Caco-2 (cell line): ENCODE measurements at regions of chr17 and their contacts with region 1.

Region 1: DNA sequence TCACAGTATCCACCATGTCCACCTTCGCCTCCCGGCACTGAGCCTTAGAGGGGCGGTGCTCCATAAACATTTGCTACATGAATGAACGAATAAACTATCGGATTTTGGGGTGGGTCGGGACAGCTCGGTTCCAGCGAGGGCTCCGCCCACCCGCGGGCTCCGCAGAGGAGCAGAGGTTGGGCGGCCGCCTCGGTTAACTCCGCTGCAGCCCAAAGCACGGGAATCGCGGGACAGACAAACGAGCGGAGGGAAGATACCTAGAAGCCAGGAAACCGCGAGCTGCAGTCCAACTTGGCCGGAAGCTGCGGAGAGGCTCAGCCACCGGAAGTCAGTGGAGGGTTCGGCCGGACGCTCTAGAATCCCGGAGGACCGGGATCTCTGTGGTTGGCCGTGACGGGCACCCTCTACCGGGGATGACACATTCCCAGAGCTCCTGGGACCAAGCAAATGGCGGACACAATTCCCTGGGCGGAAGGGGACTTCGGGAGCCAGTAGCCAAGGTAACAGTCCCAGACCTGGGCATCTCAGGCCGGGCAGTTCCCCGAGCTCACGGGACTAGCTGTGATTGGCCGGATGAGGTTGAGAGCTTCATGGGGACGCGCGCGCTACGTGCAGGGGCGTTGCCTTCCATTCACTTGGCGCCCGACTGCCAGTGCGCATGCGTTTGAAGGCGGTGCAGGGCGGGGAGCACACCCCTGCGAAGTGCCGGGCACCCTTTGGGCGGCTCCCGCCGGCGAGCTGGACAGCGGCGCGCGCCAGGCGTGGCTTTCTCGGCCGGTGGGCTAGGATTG is 501 bp upstream of the MAPK7 start:
- DNase-seq: peak; percentile 99
- H3K4me3 ChIP-seq: peak overlapping the region; percentile 80
- H3K4me3 Mint-ChIP-seq: peak overlapping the region; percentile 99
- H3K27ac Mint-ChIP-seq: peak overlapping the region; percentile 96
- H3K4me1 ChIP-seq: peaks cover 11% of the 10 kb centered on the region
- H3K4me1 Mint-ChIP-seq: peaks cover 6% of the 10 kb centered on the region
- H3K27me3 ChIP-seq: no peaks in the 10 kb centered on the region
- H3K27me3 Mint-ChIP-seq: no peaks in the 10 kb centered on the region
- CTCF ChIP-seq: peak in 1 of 2 experiments; percentile 4

Region 2: DNA sequence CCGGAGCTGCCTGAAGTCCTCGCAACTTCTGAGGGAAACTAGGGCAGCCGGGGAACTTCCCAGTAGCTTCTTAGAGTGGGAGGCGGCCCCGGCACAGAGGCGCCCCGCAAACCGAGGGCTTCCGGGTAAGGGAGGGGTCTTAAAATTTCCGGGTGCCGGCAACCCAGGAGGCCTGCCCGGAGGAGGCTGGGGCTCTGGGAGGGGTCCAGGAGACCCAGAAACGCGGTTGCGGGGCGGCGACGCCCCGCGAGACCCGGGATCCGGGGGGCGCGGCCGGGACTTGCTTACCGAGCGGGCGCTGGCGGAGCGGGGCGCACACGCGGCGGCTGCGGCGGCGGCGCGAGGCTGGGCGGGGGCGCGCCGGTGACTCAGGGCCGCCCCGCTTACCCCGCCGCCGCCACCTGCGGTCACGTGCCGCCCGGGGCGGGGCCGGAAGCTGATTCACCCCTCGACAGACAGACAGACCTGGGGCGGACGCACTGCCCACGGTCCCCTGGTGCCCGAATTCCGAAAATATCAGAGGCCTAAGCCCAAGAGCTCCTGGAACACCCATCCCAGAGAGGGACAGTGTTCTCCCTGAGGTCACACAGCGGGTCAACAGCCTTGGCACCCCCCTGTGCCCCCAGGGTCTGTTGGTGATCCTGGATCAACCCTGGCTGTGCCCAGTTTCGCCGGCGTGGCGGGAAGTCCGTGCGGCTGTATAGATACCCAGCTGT is 373.2 kb before region 1 on chr17 and contains the start of gene FAM83G:
- CTCF ChIA-PET with region 1: no interaction called
- POLR2A ChIA-PET with region 1: interaction called, 12 read pairs
- intact Hi-C with region 1: no loop called
- DNase-seq: peak; percentile 82 to 89
- H3K4me3 ChIP-seq: peak within 1 kb of the TSS; percentile 93
- H3K4me3 Mint-ChIP-seq: peak within 1 kb of the TSS; percentile 75
- H3K27ac Mint-ChIP-seq: peak within 1 kb of the TSS; percentile 58
- H3K4me1 ChIP-seq: peaks cover 27% of the 10 kb centered on the region
- H3K4me1 Mint-ChIP-seq: peaks cover 7% of the 10 kb centered on the region
- H3K27me3 ChIP-seq: no peaks in the 10 kb centered on the region
- H3K27me3 Mint-ChIP-seq: no peaks in the 10 kb centered on the region
- CTCF ChIP-seq: no peak
- total RNA-seq, gene FAM83G: 24.3 and 28.1 TPM in 2 replicates

Region 3: GRCh38 chr17:19362277-19363113 is 15.3 kb before region 1 on chr17 and contains the start of gene B9D1:
- CTCF ChIA-PET with region 1: interaction called, 69 read pairs
- POLR2A ChIA-PET with region 1: interaction called, 30 read pairs
- intact Hi-C with region 1: loop called (anchors 1 kb)
- DNase-seq: peak; percentile 93 to 94
- H3K4me3 ChIP-seq: peak within 1 kb of the TSS; percentile 81
- H3K4me3 Mint-ChIP-seq: peak within 1 kb of the TSS; percentile 80
- H3K27ac Mint-ChIP-seq: peak within 1 kb of the TSS; percentile 68
- H3K4me1 ChIP-seq: peaks cover 6% of the 10 kb centered on the region
- H3K4me1 Mint-ChIP-seq: no peaks in the 10 kb centered on the region
- H3K27me3 ChIP-seq: no peaks in the 10 kb centered on the region
- H3K27me3 Mint-ChIP-seq: no peaks in the 10 kb centered on the region
- CTCF ChIP-seq: peak; percentile 94 to 98
- total RNA-seq, gene B9D1: 8.1 and 11.5 TPM in 2 replicates

Region 4: GRCh38 chr17:19433727-19434340 is 56.0 kb after region 1 on chr17:
- CTCF ChIA-PET with region 1: no interaction called
- POLR2A ChIA-PET with region 1: no interaction called
- intact Hi-C with region 1: loop called (anchors 5 kb)
- DNase-seq: no peak
- H3K4me3 ChIP-seq: no peak overlapping the region
- H3K4me3 Mint-ChIP-seq: no peak overlapping the region
- H3K27ac Mint-ChIP-seq: no peak overlapping the region
- H3K4me1 ChIP-seq: no peaks in the 10 kb centered on the region
- H3K4me1 Mint-ChIP-seq: no peaks in the 10 kb centered on the region
- H3K27me3 ChIP-seq: no peaks in the 10 kb centered on the region
- H3K27me3 Mint-ChIP-seq: no peaks in the 10 kb centered on the region
- CTCF ChIP-seq: no peak